Naive thymus-derived CD4-positive, alpha-beta T cell (primary cell): ENCODE measurements at regions of chr9 and their contacts with region 1.

Region 1: DNA sequence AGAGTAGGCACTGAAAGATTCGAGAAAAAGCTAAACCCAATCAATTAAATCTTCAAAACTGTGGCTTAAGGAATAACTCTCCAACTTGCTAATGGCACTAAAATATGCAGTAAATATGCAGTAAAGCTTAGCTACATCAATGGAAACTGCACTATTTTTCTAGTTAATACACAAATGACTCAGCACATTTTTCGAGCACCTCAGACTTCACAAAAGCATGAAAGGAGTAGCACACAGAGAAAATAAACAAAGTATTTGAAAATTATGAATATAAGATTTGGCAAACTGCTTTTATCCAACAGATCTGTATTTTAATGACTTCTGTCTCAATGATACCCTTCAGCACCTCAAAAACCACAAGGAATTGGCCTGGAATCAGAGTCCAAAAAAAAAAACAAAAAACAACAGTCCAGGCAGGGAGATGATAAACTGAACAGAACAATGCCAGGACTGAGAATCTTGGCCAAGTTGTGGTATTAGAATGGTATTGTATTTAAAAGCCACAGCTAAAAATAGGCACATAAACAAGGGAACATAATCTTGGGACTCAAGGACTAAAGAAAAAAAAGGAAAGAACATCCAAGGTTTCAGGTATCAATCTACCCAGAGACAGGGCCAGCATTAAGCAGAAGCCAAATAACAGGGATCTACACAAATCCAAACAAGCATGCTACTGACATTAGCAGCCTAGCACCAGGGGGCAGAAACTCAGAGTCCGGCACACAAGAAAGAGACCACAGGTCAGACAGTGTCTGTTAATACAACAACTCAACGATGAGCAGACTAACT is 21.4 kb downstream of the TMEM245 start:
- DNase-seq: no peak
- ATAC-seq: no peak
- H3K4me3 ChIP-seq: no peak overlapping the region
- H3K4me3 Mint-ChIP-seq: peak overlapping the region; percentile 22 to 69 (median 63)
- H3K27ac ChIP-seq: no peak overlapping the region
- H3K27ac Mint-ChIP-seq: peak overlapping the region; percentile 65 to 90 (median 74)
- H3K4me1 ChIP-seq: peaks cover 20 to 79% of the 10 kb centered on the region in 2 donors
- H3K4me1 Mint-ChIP-seq: peaks cover 57 to 97% (median 95%) of the 10 kb centered on the region in 7 donors
- H3K27me3 ChIP-seq: no peaks in the 10 kb centered on the region
- H3K27me3 Mint-ChIP-seq: no peaks in the 10 kb centered on the region

Region 2: GRCh38 chr9:109031241-109031640 is 67.1 kb before region 1 on chr9:
- CTCF ChIA-PET with region 1: no interaction called
- POLR2A ChIA-PET with region 1: no interaction called
- intact Hi-C with region 1: loop called in 1 of 2 experiments (anchors 5 kb)
- DNase-seq: no peak
- ATAC-seq: no peak
- H3K4me3 ChIP-seq: no peak overlapping the region
- H3K4me3 Mint-ChIP-seq: no peak overlapping the region
- H3K27ac ChIP-seq: no peak overlapping the region
- H3K27ac Mint-ChIP-seq: no peak overlapping the region
- H3K4me1 ChIP-seq: no peaks in the 10 kb centered on the region
- H3K4me1 Mint-ChIP-seq: peaks cover 5 to 15% (median 10%) of the 10 kb centered on the region in 7 donors
- H3K27me3 ChIP-seq: no peaks in the 10 kb centered on the region
- H3K27me3 Mint-ChIP-seq: no peaks in the 10 kb centered on the region

Region 3: GRCh38 chr9:109086242-109086641 is 12.1 kb before region 1 on chr9:
- CTCF ChIA-PET with region 1: interaction called, 3 read pairs
- POLR2A ChIA-PET with region 1: interaction called, 3 read pairs
- intact Hi-C with region 1: loop called in 1 of 2 experiments (anchors 1 kb)
- DNase-seq: no peak
- ATAC-seq: peak; percentile 72
- H3K4me3 ChIP-seq: no peak overlapping the region
- H3K4me3 Mint-ChIP-seq: no peak overlapping the region
- H3K27ac ChIP-seq: no peak overlapping the region
- H3K27ac Mint-ChIP-seq: peak overlapping the region in 2 of 9 donors; percentile 31 to 43
- H3K4me1 ChIP-seq: no peaks in the 10 kb centered on the region
- H3K4me1 Mint-ChIP-seq: peaks cover 6 to 20% (median 9%) of the 10 kb centered on the region in 7 donors
- H3K27me3 ChIP-seq: no peaks in the 10 kb centered on the region
- H3K27me3 Mint-ChIP-seq: no peaks in the 10 kb centered on the region

Region 4: DNA sequence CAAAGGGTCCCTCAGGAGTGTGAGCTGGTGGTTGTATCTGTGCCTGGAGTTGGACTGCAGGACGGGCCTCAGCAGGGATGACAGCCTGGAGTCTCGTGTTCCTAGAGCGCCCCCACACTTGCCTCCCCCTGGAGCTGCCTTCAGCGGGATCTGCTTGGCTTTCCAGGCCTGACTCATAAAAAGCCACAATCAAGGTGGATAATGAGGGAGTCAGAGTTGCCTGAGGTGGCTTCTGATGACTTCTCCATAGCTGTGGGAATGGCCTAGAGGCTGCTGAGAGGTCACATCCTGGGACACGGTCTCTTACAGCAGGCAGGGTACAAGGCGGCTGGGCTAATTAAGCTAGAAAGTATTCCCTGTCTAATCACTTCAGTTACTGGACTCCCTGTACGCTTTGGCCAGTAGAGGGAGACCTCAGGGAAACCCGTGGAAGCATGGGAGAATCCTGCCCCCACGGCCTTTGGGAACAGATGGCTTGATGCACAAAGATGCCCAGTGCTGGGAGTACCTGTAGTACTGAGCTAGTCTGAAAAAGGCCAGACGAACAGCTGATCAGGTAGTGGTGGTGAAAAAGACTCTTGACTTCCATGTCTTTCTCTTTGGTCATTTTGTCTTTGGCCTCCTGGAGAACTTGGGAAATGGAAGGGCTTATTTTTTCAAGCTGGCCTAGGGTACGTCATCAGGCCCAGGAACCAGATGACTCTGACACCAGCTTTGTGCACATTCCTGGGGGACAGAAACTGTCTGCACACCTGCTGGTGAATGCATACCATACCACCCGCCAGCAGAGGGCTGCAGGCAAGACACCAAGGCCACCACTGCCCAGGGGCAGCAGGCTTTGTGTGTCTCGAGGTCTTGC is 84.8 kb after region 1 on chr9:
- CTCF ChIA-PET with region 1: no interaction called
- POLR2A ChIA-PET with region 1: no interaction called
- intact Hi-C with region 1: loop called in 1 of 2 experiments (anchors 5 kb)
- DNase-seq: no peak
- ATAC-seq: no peak
- H3K4me3 ChIP-seq: no peak overlapping the region
- H3K4me3 Mint-ChIP-seq: no peak overlapping the region
- H3K27ac ChIP-seq: no peak overlapping the region
- H3K27ac Mint-ChIP-seq: peak overlapping the region in 1 of 9 donors; percentile 48
- H3K4me1 ChIP-seq: no peaks in the 10 kb centered on the region
- H3K4me1 Mint-ChIP-seq: peaks cover 0 to 25% (median 20%) of the 10 kb centered on the region in 7 donors
- H3K27me3 ChIP-seq: no peaks in the 10 kb centered on the region
- H3K27me3 Mint-ChIP-seq: peaks cover 0 to 25% (median 0%) of the 10 kb centered on the region in 5 donors

Region 5: GRCh38 chr9:110256380-110257096 is 1158.2 kb after region 1 on chr9 and contains the start of gene TXN:
- CTCF ChIA-PET with region 1: no interaction called
- POLR2A ChIA-PET with region 1: no interaction called
- intact Hi-C with region 1: loop called in 1 of 2 experiments (anchors 5 kb)
- DNase-seq: peak; percentile 56 to 91 (median 74)
- ATAC-seq: peak; percentile 88
- H3K4me3 ChIP-seq: peak within 1 kb of the TSS; percentile 85
- H3K4me3 Mint-ChIP-seq: peak within 1 kb of the TSS; percentile 83 to 99 (median 96)
- H3K27ac ChIP-seq: peak within 1 kb of the TSS; percentile 65
- H3K27ac Mint-ChIP-seq: peak within 1 kb of the TSS; percentile 87 to 97 (median 89)
- H3K4me1 ChIP-seq: peaks cover 4 to 11% of the 10 kb centered on the region in 2 donors
- H3K4me1 Mint-ChIP-seq: peaks cover 16 to 52% (median 32%) of the 10 kb centered on the region in 7 donors
- H3K27me3 ChIP-seq: no peaks in the 10 kb centered on the region
- H3K27me3 Mint-ChIP-seq: peaks cover 0 to 5% (median 0%) of the 10 kb centered on the region in 5 donors
- total RNA-seq, gene TXN: 22.2 to 276 (median 24.9) TPM